Activated CD8-positive, alpha-beta T cell treated with anti-CD3 and anti-CD28 coated beads, Interleukin-2, amount 10 ng/mL, durations not matched to agents 7 days and 5 days (primary cell): ENCODE measurements at regions of chr10 and their contacts with region 1.

Region 1: DNA sequence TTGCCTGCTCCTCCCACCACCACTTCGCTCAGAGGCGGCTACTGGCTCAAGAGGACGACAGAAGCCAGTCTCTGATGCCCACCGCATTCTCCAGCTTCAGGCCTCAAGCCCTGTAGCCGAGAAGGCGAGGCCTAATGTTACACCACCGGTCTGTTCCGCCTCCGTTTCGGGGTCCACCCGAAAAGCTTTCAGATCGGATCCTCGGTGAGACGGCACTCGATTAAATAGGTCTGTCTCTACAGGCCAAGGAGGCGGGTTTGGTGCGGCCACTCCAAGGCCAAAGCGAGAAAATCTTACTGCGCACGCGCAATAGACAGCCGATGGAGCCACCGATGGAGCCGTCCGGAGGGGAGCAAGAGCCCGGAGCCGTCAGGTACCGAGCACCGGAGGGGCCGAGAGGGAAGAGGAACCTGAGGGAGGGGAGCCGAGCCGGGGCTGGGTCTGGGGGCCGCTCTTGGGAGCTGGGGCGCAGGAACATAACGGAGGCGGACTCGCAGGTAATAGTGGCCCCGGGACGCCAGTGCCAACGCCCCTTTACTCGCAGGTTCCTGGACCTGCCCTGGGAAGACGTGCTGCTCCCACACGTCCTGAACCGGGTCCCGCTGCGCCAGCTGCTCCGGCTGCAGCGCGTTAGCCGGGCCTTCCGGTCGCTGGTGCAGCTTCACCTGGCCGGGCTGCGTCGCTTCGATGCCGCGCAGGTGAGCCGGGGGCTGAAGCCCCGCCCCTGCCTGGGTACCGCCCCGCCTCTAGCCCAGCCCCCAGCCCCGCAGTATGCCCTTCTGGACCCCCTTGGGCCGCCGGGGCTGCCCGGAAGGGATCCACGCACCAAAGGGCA is at the start of gene FBXL15:
- DNase-seq: peak; percentile 97
- ATAC-seq: peak; percentile 81
- H3K4me3 Mint-ChIP-seq: peak within 1 kb of the TSS; percentile 94
- H3K27ac Mint-ChIP-seq: peak within 1 kb of the TSS; percentile 93
- H3K4me1 Mint-ChIP-seq: peaks cover 42% of the 10 kb centered on the region
- H3K27me3 Mint-ChIP-seq: peaks cover 14% of the 10 kb centered on the region
- total RNA-seq, gene FBXL15: 12.7 to 13.8 TPM

Region 2: GRCh38 chr10:102334101-102334500 is 86.9 kb before region 1 on chr10:
- CTCF ChIA-PET with region 1: no interaction called
- POLR2A ChIA-PET with region 1: no interaction called
- DNase-seq: no peak
- ATAC-seq: no peak
- H3K4me3 Mint-ChIP-seq: no peak overlapping the region
- H3K27ac Mint-ChIP-seq: no peak overlapping the region
- H3K4me1 Mint-ChIP-seq: no peaks in the 10 kb centered on the region
- H3K27me3 Mint-ChIP-seq: no peaks in the 10 kb centered on the region

Region 3: DNA sequence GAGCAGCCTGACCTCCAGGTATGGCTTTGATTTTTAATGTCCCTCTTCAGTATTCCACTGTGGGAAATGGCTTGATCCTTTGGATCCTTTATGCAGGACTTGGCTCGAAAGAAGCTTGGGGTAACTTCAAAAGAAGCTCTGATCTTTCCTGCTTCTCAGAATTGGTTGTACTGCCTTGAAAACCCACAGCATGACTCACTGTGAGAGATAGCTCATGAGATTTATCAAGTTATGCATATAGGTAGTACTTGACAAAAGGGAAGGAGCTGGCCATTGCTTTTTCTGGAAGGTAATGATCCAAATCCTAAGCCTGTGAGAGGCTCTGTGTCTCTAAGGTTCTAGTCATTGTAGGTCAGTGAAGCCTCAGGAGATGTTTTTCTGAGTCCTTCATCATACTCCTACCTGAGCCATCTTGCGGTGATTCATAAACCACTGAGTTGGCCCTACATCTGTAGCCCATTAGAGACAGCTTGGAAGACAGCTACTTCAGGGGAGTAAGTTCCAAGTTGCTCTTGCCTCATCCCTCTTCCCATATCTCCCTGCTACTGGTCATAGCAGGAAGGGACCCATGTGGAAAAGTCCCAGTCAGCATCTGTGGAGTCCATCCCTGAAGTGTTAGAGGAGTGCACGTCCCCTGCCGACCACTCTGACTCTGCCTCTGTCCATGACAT is 62.2 kb before region 1 on chr10:
- CTCF ChIA-PET with region 1: no interaction called
- POLR2A ChIA-PET with region 1: no interaction called
- DNase-seq: no peak
- ATAC-seq: peak; percentile 27
- H3K4me3 Mint-ChIP-seq: no peak overlapping the region
- H3K27ac Mint-ChIP-seq: no peak overlapping the region
- H3K4me1 Mint-ChIP-seq: peaks cover 13% of the 10 kb centered on the region
- H3K27me3 Mint-ChIP-seq: no peaks in the 10 kb centered on the region

Region 4: GRCh38 chr10:102375250-102375649 is 45.8 kb before region 1 on chr10:
- CTCF ChIA-PET with region 1: no interaction called
- POLR2A ChIA-PET with region 1: no interaction called
- DNase-seq: no peak
- ATAC-seq: peak; percentile 57
- H3K4me3 Mint-ChIP-seq: no peak overlapping the region
- H3K27ac Mint-ChIP-seq: no peak overlapping the region
- H3K4me1 Mint-ChIP-seq: no peaks in the 10 kb centered on the region
- H3K27me3 Mint-ChIP-seq: no peaks in the 10 kb centered on the region

Region 5: DNA sequence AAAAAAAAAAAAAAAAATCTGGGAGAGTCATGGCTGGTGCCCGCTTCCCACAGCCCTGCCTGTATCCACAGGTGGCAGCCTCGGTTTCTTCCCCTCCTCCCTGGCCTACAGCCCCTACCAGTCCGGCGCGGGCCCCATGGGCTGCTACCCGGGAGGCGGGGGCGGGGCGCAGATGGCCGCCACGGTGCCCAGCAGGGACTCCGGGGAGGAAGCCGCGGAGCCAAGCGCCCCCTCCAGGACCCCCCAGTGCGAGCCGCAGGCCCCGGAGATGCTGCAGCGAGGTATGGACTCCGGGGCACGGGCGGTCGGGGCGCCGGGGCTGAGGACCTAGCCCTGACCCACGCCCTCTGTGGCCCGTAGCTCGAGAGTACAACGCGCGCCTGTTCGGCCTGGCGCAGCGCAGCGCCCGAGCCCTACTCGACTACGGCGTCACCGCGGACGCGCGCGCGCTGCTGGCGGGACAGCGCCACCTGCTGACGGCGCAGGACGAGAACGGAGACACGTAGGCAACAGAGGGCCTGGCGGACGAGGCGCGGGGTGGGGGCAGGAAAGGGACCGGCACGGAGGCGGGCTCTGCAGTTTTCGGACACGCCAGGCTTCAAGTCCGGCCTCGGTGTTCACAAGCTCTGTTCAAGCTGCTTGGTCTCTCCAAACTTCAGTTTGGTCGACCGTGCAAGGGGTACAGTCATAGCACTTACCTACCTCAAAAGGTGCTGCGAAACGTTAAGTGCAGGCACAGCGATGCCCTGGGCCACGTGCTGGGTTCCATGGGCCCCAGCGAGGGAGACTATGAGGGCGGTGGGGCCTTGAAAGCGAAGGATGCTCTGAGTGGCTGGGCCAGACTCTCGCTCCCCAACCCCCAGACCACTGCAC is 21.6 kb before region 1 on chr10:
- CTCF ChIA-PET with region 1: interaction called, 39 read pairs
- POLR2A ChIA-PET with region 1: interaction called, 68 read pairs
- DNase-seq: peak; percentile 92
- ATAC-seq: peak; percentile 63
- H3K4me3 Mint-ChIP-seq: peak overlapping the region; percentile 56
- H3K27ac Mint-ChIP-seq: peak overlapping the region; percentile 78
- H3K4me1 Mint-ChIP-seq: peaks cover 39% of the 10 kb centered on the region
- H3K27me3 Mint-ChIP-seq: no peaks in the 10 kb centered on the region

Region 6: DNA sequence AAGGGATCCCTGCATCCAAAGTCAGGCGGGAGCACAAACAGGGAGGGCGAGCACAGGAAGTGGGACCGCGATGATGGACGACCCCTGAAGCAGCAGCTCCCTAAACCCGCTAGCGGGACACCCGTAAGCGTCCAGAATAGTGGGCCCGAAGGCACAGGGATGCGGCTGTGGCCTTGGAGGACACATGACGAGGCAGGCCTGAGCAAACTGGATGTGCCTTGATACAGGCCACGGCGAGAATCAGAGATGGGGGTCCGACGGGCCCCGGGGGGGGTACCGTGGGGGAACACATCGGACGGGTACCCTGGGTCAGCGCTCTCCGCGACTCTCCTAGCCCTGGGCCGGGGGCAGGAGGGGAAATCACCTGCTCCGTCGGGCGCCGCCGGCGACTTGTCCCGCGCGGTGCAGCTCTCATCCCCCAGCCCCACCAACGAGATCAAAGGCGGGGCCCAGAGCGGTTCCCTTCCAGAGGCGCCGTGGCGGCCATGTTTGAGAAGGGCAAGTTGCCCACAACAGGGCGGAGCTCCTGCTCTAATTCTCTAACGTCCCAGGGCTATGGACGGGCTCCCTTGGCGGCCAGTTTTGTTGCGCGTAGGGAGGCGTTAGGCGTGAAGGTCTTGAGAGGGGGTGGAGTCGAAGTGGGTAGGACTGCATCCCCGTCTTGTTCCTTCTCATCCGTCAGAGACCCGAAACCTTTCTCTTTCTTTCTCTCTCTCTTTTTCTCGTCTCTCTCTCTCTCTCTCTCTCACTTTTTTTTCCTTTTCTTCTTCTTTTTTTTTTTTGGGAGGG is 11.3 kb after region 1 on chr10 and contains the start of gene CUEDC2:
- CTCF ChIA-PET with region 1: interaction called, 36 read pairs
- POLR2A ChIA-PET with region 1: interaction called, 75 read pairs
- DNase-seq: peak; percentile 97
- ATAC-seq: peak; percentile 90
- H3K4me3 Mint-ChIP-seq: peak within 1 kb of the TSS; percentile 95
- H3K27ac Mint-ChIP-seq: peak within 1 kb of the TSS; percentile 94
- H3K4me1 Mint-ChIP-seq: peaks cover 47% of the 10 kb centered on the region
- H3K27me3 Mint-ChIP-seq: no peaks in the 10 kb centered on the region
- total RNA-seq, gene CUEDC2: 71.7 to 77.6 TPM

Region 7: DNA sequence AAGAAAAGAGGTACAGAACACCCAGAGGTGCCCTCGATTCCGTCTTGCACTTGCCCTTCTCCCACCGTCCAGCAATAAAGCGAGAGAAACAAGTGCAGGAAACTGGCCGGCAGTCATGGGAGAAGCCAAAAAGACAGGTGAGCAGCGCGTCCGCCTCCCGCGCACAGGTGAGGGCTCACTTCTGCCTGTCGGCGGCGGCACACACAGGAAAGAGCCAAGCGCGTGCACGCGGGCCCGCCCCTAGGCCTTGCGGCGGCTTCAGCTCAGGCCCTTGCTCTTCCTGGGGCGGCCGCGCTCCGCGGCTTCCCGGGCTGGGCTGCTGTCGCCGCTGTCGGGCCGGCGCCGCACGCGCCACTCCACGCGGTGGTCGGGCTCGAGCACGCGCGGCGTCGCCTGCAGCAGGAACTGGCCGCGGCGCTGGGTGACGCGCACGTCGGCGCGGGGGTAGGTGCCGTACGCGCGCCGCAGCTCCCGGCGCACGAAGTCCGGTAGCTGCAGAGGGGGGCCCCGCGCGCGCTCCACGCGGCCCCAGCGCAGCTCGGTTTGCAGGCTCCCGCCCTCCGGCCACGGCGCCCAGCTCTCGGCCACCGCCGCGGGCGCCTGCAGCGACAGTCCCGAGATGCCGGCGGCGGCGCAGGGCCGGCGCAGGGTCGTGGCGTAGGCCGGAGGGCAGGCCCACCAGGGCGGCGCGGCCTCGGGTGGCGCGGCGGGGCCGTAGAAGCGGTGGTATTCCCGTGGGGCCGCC is 29.3 kb after region 1 on chr10:
- CTCF ChIA-PET with region 1: interaction called, 31 read pairs
- POLR2A ChIA-PET with region 1: interaction called, 26 read pairs
- DNase-seq: peak; percentile 93
- ATAC-seq: peak; percentile 85
- H3K4me3 Mint-ChIP-seq: peak overlapping the region; percentile 90
- H3K27ac Mint-ChIP-seq: peak overlapping the region; percentile 93
- H3K4me1 Mint-ChIP-seq: peaks cover 47% of the 10 kb centered on the region
- H3K27me3 Mint-ChIP-seq: no peaks in the 10 kb centered on the region

Region 8: DNA sequence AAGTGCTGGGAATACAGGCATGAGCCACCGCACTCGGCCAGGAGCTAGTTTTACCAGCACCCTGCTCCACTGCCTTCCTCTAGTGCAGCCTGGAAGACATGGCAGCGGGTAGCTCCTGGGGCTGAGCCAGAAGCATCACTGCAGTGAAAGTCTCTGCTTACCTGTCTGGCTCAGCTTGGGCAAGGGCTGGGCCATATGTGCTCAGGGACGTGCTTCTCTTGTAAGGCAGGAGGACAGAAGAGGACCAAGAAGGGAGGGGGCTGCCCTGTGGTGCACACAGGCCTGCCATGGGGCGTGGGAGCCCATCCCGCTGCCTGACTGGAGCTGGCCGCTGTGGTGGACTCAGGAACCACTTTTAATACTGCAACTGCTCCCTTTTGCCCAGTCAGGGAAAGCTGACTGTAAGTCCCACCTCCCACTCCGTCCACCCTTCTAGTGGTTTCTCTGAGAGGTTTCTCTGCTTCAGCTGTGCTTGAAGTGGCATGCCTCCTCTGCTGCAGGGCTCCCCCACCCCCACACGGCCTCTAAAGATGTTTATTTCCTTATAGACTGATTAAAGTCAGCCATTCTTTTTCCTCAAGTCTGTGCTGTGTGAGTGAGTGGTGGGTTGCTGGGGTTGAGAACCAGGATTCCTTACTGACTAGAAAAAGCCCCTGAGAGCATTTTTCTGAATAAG is 55.6 kb after region 1 on chr10:
- CTCF ChIA-PET with region 1: interaction called, 19 read pairs
- POLR2A ChIA-PET with region 1: interaction called, 3 read pairs
- DNase-seq: peak; percentile 33
- ATAC-seq: no peak
- H3K4me3 Mint-ChIP-seq: no peak overlapping the region
- H3K27ac Mint-ChIP-seq: peak overlapping the region; percentile 72
- H3K4me1 Mint-ChIP-seq: peaks cover 29% of the 10 kb centered on the region
- H3K27me3 Mint-ChIP-seq: no peaks in the 10 kb centered on the region